ENCODE measurements at regions of chr18 and their contacts with region 1.

Region 1: DNA sequence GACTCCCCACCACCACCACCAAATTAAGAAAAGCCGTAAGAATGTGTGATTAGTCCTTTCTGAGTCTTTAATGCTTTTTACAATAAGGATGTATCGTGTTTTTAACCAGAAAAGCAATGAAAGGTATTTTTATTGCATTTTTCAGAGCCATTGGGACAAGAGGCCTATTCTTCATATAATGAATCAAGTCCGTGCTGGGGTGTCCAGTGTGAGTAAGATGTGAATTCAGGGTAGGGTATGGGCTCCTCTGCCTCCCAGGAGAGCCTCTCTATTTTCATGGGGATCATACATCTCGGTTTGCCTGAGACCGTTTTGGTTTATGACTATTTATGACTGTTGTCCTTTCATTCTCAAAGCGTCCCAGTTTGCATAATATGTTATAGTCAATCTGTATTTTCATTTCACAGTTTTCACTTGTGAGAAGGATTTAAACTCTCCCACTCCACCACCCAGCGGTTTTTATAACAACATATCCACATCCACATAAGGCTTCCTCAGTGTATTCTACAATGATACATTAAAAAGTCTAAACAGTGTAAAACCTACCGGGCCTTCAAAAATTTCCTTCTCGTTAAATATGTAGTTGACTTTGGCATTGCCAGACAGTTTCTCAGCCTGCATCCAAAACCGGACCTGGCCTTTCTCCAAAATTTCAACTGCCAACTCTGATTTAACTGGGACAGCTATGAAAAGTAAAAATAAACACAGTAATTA is 80.8 kb upstream of the LPIN2 start:
- DNase-seq: peak; percentile 41
- ATAC-seq: peak; percentile 72
- H3K4me3 ChIP-seq: no peak overlapping the region
- H3K27ac ChIP-seq: peak overlapping the region; percentile 13; the same call in 1 of the 2 replicates
- H3K4me1 ChIP-seq: peaks cover 17% of the 10 kb centered on the region
- H3K27me3 ChIP-seq: no peaks in the 10 kb centered on the region
- CTCF ChIP-seq: no peak

Region 2: GRCh38 chr18:2325308-2325849 is 768.4 kb before region 1 on chr18:
- CTCF ChIA-PET with region 1: no interaction called
- POLR2A ChIA-PET with region 1: no interaction called
- intact Hi-C with region 1: no loop called
- DNase-seq: no peak
- ATAC-seq: no peak
- H3K4me3 ChIP-seq: no peak overlapping the region
- H3K27ac ChIP-seq: no peak overlapping the region
- H3K4me1 ChIP-seq: no peaks in the 10 kb centered on the region
- H3K27me3 ChIP-seq: no peaks in the 10 kb centered on the region
- CTCF ChIP-seq: no peak

Region 3: GRCh38 chr18:2997846-2998564 is 95.8 kb before region 1 on chr18:
- CTCF ChIA-PET with region 1: no interaction called
- POLR2A ChIA-PET with region 1: no interaction called
- intact Hi-C with region 1: no loop called
- DNase-seq: no peak
- ATAC-seq: no peak
- H3K4me3 ChIP-seq: no peak overlapping the region
- H3K27ac ChIP-seq: no peak overlapping the region
- H3K4me1 ChIP-seq: peaks cover 7% of the 10 kb centered on the region; the same call in 1 of the 2 replicates
- H3K27me3 ChIP-seq: no peaks in the 10 kb centered on the region
- CTCF ChIP-seq: no peak

Region 4: DNA sequence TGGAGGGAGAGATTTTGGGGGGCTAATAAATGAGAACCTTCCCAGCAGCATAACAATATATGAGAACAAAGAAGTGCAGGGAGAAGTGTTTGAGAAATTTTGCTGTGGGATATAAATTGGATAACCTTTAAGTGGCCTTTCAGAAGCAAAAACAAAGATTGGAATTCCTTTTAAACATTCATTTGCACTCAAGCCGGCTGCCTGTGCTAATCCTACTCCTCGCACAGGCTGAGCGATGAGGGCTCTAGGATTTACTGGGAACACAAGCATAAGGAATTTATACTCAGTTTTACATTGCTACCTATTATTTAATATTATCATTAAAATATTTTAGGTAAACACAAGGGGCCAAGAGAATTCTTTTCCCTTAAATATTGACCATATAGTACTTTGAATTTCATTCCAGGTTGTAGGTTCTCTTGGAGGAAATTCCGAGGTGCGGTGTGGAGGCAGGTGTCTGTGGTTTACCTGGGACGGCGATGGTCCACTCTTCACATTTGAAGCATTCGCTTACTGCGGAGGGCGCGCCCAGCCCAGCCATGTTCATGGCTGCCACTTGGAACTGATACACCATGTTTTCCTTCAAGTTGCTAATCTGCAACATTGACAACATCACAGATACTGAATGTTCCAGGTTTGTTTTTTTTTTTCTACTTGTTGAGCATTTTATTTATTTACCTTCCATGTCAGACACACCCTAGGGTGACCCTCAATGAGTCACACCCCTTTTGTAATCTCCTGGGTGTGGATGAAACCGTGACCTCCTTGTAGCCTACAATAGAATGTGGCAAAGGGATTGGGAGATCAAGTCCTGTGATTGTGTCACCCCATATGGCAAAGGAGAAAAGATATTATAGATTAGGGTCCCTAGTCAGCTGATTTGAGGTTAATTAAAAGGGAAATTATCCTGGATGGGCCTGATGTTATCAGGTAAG is 25.9 kb after region 1 on chr18:
- CTCF ChIA-PET with region 1: no interaction called
- POLR2A ChIA-PET with region 1: no interaction called
- intact Hi-C with region 1: loop called (anchors 1 kb)
- DNase-seq: peak; percentile 84
- ATAC-seq: peak; percentile 50
- H3K4me3 ChIP-seq: no peak overlapping the region
- H3K27ac ChIP-seq: peak overlapping the region; percentile 38
- H3K4me1 ChIP-seq: peaks cover 50% of the 10 kb centered on the region
- H3K27me3 ChIP-seq: no peaks in the 10 kb centered on the region
- CTCF ChIP-seq: no peak

Region 5: DNA sequence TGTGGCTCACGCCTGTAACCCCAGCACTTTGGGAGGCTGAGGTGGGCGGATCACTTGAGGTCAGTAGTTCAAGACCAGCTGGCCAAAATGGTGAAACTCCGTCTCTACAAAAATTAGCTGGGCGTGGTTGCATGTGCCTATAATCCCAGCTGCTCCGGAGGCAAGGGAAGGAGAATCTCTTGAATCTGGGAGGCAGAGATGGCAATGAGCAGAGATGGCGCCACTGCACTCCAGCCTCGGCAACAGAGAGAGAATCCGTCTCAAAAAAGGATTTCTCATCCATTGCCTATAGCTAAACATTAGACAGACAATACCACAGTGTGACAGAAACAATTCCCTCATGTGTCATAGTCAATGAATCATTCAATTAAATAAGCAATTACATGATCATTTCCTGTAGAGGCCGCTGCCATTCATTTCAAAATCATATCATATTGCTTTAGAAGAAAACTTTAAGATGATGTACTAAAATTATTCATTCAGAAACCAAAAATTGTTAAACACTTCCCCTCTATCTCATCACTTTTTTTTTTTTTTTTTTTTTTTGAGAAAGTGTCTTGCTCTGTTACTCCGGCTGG is 286.7 kb after region 1 on chr18:
- CTCF ChIA-PET with region 1: interaction called, 10 read pairs
- POLR2A ChIA-PET with region 1: no interaction called
- intact Hi-C with region 1: no loop called
- DNase-seq: peak; percentile 71
- ATAC-seq: peak; percentile 86
- H3K4me3 ChIP-seq: no peak overlapping the region
- H3K27ac ChIP-seq: no peak overlapping the region
- H3K4me1 ChIP-seq: peaks cover 20% of the 10 kb centered on the region
- H3K27me3 ChIP-seq: no peaks in the 10 kb centered on the region
- CTCF ChIP-seq: peak; percentile 53